ENCODE measurements at regions of chr17 and their contacts with region 1.

Region 1: GRCh38 chr17:9890124-9890523 is 14.9 kb downstream of the RCVRN start:
- DNase-seq: no peak
- ATAC-seq: peak; percentile 61
- H3K4me3 ChIP-seq: no peak overlapping the region
- H3K27ac ChIP-seq: no peak overlapping the region
- H3K4me1 ChIP-seq: no peaks in the 10 kb centered on the region
- H3K27me3 ChIP-seq: no peaks in the 10 kb centered on the region; a peak in 1 of 4 replicates
- CTCF ChIP-seq: peak; percentile 23 to 62 (median 58)
- EP300 ChIP-seq: no peak
- POLR2A ChIP-seq: no peak
- RAD21 ChIP-seq: no peak

Region 2: DNA sequence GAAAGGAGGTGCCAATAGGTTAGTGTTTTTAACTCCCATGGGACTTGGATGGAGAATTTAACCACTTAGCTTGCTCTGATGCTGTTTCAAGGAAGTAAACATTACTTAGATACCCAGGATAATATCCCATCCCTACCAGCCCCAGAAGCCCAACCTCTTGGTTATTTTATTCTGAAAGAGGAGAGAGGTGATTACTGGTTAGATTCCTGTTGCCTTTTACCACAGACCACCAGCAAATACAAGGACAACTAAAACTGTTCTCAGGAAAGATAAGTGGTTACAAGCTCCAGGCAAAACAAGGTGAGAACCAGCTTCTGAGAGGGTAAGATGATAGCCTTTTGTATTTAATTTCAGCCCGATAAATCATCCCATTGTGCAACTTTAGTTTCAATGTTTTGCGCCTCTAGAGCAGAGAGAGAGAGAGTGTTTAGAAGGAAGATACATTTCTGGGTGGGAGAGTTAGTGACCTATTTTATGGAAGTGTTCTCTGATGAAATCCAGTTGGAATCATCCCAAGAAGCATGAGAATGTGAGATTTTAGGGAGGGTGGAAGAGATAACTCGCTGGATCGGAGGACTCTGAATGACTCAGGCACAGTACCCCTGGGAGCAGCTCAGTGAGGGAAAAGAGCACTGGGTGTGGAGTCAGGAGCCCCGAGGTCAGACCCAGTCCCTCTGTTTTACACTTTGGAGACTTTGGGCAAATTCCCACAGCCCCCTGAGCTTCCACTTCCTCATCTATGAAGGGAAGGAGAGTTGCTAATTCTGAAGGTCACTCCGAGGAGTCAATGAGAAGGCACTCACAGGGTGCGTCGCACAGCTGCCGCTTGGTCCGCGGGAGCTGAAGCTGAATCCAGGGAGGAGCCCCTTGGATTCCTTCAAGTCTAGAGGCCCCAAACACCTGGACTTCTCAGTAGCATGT is 52.3 kb before region 1 on chr17:
- CTCF ChIA-PET with region 1: no interaction called
- POLR2A ChIA-PET with region 1: no interaction called
- RAD21 ChIA-PET with region 1: no interaction called
- SMC1A ChIA-PET with region 1: no interaction called
- in situ Hi-C with region 1: loop called (anchors 10 kb)
- intact Hi-C with region 1: no loop called
- DNase-seq: no peak
- ATAC-seq: no peak
- H3K4me3 ChIP-seq: no peak overlapping the region
- H3K27ac ChIP-seq: no peak overlapping the region
- H3K4me1 ChIP-seq: no peaks in the 10 kb centered on the region
- H3K27me3 ChIP-seq: no peaks in the 10 kb centered on the region
- CTCF ChIP-seq: no peak
- EP300 ChIP-seq: no peak
- POLR2A ChIP-seq: no peak
- RAD21 ChIP-seq: no peak

Region 3: GRCh38 chr17:9859781-9860180 is 30.3 kb before region 1 on chr17:
- CTCF ChIA-PET with region 1: no interaction called
- POLR2A ChIA-PET with region 1: no interaction called
- RAD21 ChIA-PET with region 1: no interaction called
- SMC1A ChIA-PET with region 1: no interaction called
- in situ Hi-C with region 1: loop called (anchors 5 kb)
- intact Hi-C with region 1: no loop called
- DNase-seq: no peak
- ATAC-seq: no peak
- H3K4me3 ChIP-seq: no peak overlapping the region
- H3K27ac ChIP-seq: no peak overlapping the region
- H3K4me1 ChIP-seq: no peaks in the 10 kb centered on the region
- H3K27me3 ChIP-seq: no peaks in the 10 kb centered on the region
- CTCF ChIP-seq: no peak
- EP300 ChIP-seq: no peak
- POLR2A ChIP-seq: no peak
- RAD21 ChIP-seq: no peak